CD8-positive, alpha-beta T cell (primary cell): ENCODE measurements at regions of chr5 and their contacts with region 1.

Region 1: DNA sequence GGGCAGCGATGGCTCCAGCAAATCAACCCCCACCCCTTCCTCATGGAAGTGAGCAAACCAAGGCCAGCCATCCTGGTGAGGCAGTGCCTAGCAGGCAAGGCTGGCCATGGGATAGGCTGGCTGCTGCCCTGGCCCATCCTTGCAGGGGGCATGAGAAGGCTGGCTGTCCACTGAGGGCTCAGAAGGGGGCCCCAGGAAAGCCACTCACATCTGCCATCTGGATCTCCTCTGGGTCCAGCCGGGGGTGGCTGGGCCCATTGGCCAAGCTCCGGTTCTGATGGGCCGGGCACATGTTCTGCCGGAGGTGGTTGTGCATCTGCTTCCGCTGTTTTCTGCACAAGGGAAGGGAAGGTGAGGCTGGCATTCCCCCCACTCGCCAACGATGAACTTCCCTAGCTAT is 57.1 kb downstream of the PSD2 start:
- DNase-seq: no peak
- ATAC-seq: no peak
- H3K4me3 ChIP-seq: no peak overlapping the region
- H3K4me3 Mint-ChIP-seq: no peak overlapping the region
- H3K27ac ChIP-seq: no peak overlapping the region
- H3K27ac Mint-ChIP-seq: no peak overlapping the region
- H3K4me1 ChIP-seq: no peaks in the 10 kb centered on the region
- H3K4me1 Mint-ChIP-seq: peaks cover 9% of the 10 kb centered on the region
- H3K27me3 ChIP-seq: no peaks in the 10 kb centered on the region
- H3K27me3 Mint-ChIP-seq: no peaks in the 10 kb centered on the region
- CTCF ChIP-seq: no peak

Region 2: GRCh38 chr5:139863855-139864558 is 11.3 kb after region 1 on chr5:
- CTCF ChIA-PET with region 1: interaction called, 11 read pairs
- POLR2A ChIA-PET with region 1: no interaction called
- intact Hi-C with region 1: no loop called
- DNase-seq: peak; percentile 16 to 69 (median 59)
- ATAC-seq: peak; percentile 70
- H3K4me3 ChIP-seq: no peak overlapping the region
- H3K4me3 Mint-ChIP-seq: no peak overlapping the region
- H3K27ac ChIP-seq: no peak overlapping the region
- H3K27ac Mint-ChIP-seq: no peak overlapping the region
- H3K4me1 ChIP-seq: no peaks in the 10 kb centered on the region
- H3K4me1 Mint-ChIP-seq: no peaks in the 10 kb centered on the region
- H3K27me3 ChIP-seq: no peaks in the 10 kb centered on the region
- H3K27me3 Mint-ChIP-seq: peaks cover 10% of the 10 kb centered on the region
- CTCF ChIP-seq: peak; percentile 85